ENCODE measurements at regions of chr17 and their contacts with region 1.

Region 1: DNA sequence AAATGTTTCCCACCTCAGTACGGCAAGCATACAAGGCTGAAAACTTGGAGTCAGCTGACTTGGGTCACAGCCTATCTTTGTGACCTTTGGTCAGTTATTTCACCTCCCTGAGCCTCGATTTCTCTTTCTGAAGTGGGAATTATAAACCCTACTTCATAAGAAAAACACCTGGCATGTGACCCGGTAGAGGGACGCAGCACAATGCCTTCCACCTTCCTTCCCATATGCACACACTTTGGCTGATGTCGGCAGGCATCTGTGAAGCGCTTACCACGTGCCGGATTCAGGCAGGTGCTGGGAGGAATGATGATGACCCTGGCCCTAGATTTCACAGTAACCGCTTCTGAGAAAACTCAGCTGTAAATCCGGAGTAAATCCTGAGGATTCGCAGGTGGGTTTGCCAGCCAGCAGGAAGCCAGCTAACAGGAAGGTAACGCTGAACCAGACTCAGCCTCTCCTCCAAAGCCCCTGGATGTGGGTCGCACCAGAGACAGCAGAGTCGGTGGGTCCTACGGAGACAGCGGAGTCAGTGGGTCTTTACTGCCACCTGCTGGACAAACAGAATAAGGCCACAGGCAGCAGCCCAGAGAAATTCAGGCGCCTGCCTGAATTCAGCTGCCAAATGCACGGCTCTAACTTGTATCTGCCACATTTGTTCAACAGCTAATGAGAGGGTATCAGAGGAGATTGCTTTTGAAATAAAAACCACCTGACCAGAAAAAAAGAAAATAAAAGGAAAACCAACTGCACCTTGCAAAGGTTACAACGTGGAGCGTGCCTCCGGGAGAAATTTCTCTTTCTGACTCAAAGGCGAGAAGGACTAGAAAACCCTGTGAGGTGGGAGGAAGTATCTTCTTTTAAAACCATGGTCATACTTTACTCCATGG is 16.6 kb downstream of the COPRS start:
- DNase-seq: peak; percentile 57
- H3K4me3 ChIP-seq: peak overlapping the region; percentile 52
- H3K27ac ChIP-seq: peak overlapping the region; percentile 67
- H3K4me1 ChIP-seq: peaks cover 28% of the 10 kb centered on the region
- H3K27me3 ChIP-seq: no peaks in the 10 kb centered on the region
- CTCF ChIP-seq: peak; percentile 99

Region 2: GRCh38 chr17:31558748-31559644 is 283.4 kb before region 1 on chr17:
- intact Hi-C with region 1: loop called (anchors 5 kb)
- DNase-seq: peak; percentile 78
- H3K4me3 ChIP-seq: peak overlapping the region; percentile 86
- H3K27ac ChIP-seq: peak overlapping the region; percentile 97
- H3K4me1 ChIP-seq: peaks cover 42% of the 10 kb centered on the region
- H3K27me3 ChIP-seq: no peaks in the 10 kb centered on the region
- CTCF ChIP-seq: peak; percentile 96